PC-3 (cell line): ENCODE measurements at regions of chr22 and their contacts with region 1.

Region 1: GRCh38 chr22:41003066-41003465 is 51.9 kb downstream of the RBX1 start:
- DNase-seq: peak; percentile 39
- ATAC-seq: no peak
- H3K4me3 ChIP-seq: no peak overlapping the region
- H3K27ac ChIP-seq: peak overlapping the region; percentile 37
- H3K4me1 ChIP-seq: peaks cover 22% of the 10 kb centered on the region
- H3K27me3 ChIP-seq: no peaks in the 10 kb centered on the region
- CTCF ChIP-seq: no peak

Region 2: DNA sequence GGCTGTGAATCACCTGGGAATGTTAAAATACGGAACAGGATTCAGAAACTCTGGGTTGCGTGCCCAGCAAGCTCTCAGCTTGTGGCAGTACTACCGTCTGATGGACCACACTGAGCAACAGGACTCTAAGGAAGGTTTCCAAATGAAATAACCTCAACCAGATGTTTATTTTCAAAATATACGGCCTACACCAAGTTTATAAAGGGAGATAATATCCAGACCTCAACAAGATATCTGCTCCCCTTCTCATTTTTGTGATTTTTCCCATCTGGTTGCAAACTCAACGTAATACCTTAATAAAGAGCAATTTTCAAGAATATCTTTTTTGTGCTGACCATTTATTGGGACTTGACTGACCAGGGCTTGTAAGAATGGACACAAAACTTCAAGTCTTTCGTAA is 233.3 kb before region 1 on chr22:
- CTCF ChIA-PET with region 1: no interaction called
- POLR2A ChIA-PET with region 1: no interaction called
- intact Hi-C with region 1: no loop called
- DNase-seq: no peak
- ATAC-seq: no peak
- H3K4me3 ChIP-seq: no peak overlapping the region
- H3K27ac ChIP-seq: no peak overlapping the region
- H3K4me1 ChIP-seq: no peaks in the 10 kb centered on the region
- H3K27me3 ChIP-seq: no peaks in the 10 kb centered on the region
- CTCF ChIP-seq: no peak

Region 3: GRCh38 chr22:40856513-40857308 is 146.4 kb before region 1 on chr22 and contains the starts of genes ST13 and XPNPEP3:
- CTCF ChIA-PET with region 1: no interaction called
- POLR2A ChIA-PET with region 1: interaction called, 13 read pairs
- intact Hi-C with region 1: no loop called
- DNase-seq: peak; percentile 90
- ATAC-seq: peak; percentile 95
- H3K4me3 ChIP-seq: peak within 1 kb of the TSS; percentile 82
- H3K27ac ChIP-seq: peak within 1 kb of the TSS; percentile 96
- H3K4me1 ChIP-seq: peaks cover 33% of the 10 kb centered on the region
- H3K27me3 ChIP-seq: no peaks in the 10 kb centered on the region
- CTCF ChIP-seq: peak; percentile 22; the same call in 1 of the 2 replicates
- total RNA-seq, gene ST13: 136 and 143 TPM in 2 replicates
- total RNA-seq, gene XPNPEP3: 7.9 and 8.5 TPM in 2 replicates